ENCODE measurements at regions of chr4 and their contacts with region 1.

Region 1: DNA sequence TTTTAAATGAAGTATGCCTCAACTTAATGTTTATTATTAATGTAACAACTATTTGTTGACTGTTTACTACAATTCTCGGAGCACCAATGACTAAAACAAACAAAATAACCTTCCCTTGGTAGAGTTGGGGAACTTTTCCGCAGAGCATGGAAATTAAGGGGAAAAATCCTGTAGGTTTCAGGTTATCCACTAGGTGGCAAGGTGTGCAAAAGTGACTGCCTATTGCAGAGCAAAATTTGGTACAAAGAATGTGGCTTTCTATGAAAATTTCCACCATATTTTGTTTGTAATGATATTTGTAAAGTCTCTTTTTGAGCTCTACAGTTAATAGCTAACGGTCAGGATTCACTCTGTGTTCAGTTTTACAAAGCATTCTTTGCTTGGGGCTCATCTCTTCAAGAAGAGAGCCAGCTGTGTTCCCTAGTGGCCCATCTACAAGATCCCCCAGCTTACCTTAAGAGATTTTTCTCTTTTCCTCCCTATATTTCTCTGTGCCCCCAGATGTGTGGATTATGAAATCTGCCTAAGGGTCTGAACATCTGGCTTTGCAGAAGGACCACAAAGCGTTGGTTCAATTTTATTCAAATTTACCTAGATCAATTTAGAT is 61.1 kb downstream of the FBXO8 start:
- DNase-seq: no peak
- ATAC-seq: peak; percentile 78
- H3K4me3 ChIP-seq: no peak overlapping the region
- H3K27ac ChIP-seq: no peak overlapping the region
- H3K4me1 ChIP-seq: no peaks in the 10 kb centered on the region
- H3K27me3 ChIP-seq: peaks cover 0 to 10% of the 10 kb centered on the region in 2 experiments; a peak in 3 of 4 replicates
- CTCF ChIP-seq: peak; percentile 56 to 63 (median 58)
- EP300 ChIP-seq: no peak
- POLR2A ChIP-seq: no peak
- RAD21 ChIP-seq: peak; percentile 71

Region 2: GRCh38 chr4:174005422-174005821 is 216.9 kb before region 1 on chr4:
- CTCF ChIA-PET with region 1: no interaction called
- POLR2A ChIA-PET with region 1: no interaction called
- RAD21 ChIA-PET with region 1: no interaction called
- SMC1A ChIA-PET with region 1: no interaction called
- in situ Hi-C with region 1: no loop called
- intact Hi-C with region 1: no loop called
- DNase-seq: no peak
- ATAC-seq: no peak
- H3K4me3 ChIP-seq: no peak overlapping the region
- H3K27ac ChIP-seq: no peak overlapping the region
- H3K4me1 ChIP-seq: no peaks in the 10 kb centered on the region
- H3K27me3 ChIP-seq: no peaks in the 10 kb centered on the region
- CTCF ChIP-seq: no peak
- EP300 ChIP-seq: no peak
- POLR2A ChIP-seq: no peak
- RAD21 ChIP-seq: no peak

Region 3: DNA sequence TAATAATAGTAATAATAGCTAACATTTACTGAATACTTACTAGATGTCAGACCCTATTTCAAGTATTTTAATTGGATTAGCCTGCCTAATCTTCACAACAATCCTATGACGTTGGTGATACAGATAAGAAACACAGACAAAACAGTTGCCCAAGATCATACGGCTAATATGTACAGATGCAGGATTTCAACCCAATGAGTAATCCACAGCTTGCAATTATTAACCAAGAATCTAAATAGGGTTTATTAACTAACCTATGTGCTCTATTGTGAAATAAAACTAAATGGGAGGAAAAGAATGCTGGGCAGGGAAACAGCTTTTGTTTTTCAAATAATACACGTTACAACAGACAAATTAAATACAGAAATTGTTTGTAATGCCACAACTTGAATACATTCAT is 37.7 kb after region 1 on chr4:
- CTCF ChIA-PET with region 1: interaction called, 10 read pairs
- POLR2A ChIA-PET with region 1: no interaction called
- RAD21 ChIA-PET with region 1: no interaction called
- SMC1A ChIA-PET with region 1: interaction called, 5 read pairs
- in situ Hi-C with region 1: no loop called
- intact Hi-C with region 1: no loop called
- DNase-seq: no peak
- ATAC-seq: peak; percentile 68
- H3K4me3 ChIP-seq: no peak overlapping the region
- H3K27ac ChIP-seq: no peak overlapping the region
- H3K4me1 ChIP-seq: no peaks in the 10 kb centered on the region
- H3K27me3 ChIP-seq: no peaks in the 10 kb centered on the region
- CTCF ChIP-seq: no peak
- EP300 ChIP-seq: no peak
- POLR2A ChIP-seq: no peak
- RAD21 ChIP-seq: no peak

Region 4: DNA sequence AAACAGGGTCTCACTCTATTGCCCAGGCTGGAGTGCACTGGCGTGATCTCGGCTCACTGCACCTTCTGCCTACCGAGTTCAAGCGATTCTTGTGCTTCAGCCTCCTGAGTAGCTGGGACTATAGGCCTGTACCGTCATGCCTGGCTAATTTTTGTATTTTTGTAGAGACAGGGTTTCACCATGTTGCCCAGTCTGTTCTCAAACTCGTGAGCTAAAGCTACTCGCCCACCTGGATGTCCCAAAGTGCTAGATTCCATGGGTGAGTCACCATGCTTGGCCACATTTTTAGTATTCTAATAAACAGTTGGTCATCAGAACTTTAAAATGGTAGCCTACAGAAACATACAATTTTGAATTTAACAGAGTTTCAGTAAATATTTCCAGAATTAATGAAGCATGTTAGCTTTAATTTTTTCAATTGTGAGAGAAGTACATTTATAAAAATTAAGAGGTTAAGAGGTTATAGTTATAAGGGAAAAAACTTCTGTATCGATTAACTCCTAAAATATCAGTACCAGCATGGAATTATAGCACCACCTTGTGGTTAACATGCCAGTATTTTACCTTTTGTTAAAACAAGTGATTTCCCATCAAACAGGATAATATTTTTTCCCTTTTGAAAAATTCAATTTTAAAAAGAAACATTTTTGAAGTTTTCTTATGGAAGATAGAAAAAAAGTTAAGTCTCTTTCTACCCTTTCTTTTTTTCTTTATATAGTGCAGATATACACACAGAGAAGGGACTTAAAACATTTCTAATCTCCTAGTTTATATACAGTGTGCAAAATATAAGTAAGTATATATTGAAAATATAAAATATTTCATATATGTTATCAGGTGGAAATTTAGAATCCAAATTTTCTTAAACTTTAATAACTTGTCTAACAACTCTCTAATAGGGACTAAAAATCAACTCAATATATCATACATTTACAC is 96.7 kb after region 1 on chr4:
- CTCF ChIA-PET with region 1: interaction called, 83 read pairs
- POLR2A ChIA-PET with region 1: interaction called, 3 read pairs
- RAD21 ChIA-PET with region 1: interaction called, 4 read pairs
- SMC1A ChIA-PET with region 1: interaction called, 46 read pairs
- in situ Hi-C with region 1: loop called (anchors 10 kb)
- intact Hi-C with region 1: loop called (anchors 1 kb)
- DNase-seq: no peak
- ATAC-seq: peak; percentile 55
- H3K4me3 ChIP-seq: no peak overlapping the region
- H3K27ac ChIP-seq: no peak overlapping the region
- H3K4me1 ChIP-seq: no peaks in the 10 kb centered on the region
- H3K27me3 ChIP-seq: no peaks in the 10 kb centered on the region
- CTCF ChIP-seq: peak; percentile 42 to 67 (median 46); a peak in 5 of 6 replicates
- EP300 ChIP-seq: no peak
- POLR2A ChIP-seq: no peak
- RAD21 ChIP-seq: peak; percentile 76

Measured in GM12878 (cell line).